ENCODE measurements at regions of chr15 and their contacts with region 1.

Region 1: DNA sequence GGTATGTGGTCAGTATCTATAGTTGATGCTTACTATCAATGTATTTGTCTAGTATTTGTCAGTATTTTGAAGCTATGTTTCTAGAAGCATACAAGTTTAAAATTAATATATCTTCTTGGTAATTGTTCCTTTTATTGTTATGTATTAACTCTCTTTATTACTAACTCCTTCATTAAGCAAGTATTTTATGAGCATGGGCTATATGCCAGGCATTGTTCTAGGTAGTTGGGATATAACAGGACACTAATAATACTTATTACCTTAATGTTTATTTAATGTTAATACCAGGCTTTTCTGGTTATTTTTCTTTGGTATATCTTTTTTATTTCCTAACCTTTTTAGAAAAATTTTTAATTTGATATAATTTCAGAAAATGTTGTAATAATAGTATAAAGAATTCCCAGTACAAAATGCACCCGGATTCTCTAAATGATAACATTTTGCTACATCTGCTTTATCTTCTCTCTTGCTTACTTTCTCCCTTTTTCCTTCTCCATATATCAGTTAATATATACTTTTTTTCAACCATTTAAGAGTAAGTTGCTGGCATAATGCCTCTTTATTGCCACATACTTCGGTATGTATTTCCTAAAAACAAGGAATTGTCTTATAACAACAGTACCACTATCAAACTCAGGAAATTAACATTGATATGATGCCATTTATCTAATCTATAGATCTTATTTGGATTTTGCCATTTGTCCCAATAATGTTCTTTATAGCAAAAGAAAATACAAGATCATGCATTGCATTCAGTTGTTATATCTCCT is 30.9 kb downstream of the LRRC49 start:
- DNase-seq: no peak
- ATAC-seq: no peak
- H3K4me3 ChIP-seq: no peak overlapping the region
- H3K27ac ChIP-seq: no peak overlapping the region
- H3K4me1 ChIP-seq: peaks cover 0 to 3% (median 0%) of the 10 kb centered on the region in 9 donors
- H3K27me3 ChIP-seq: no peaks in the 10 kb centered on the region
- CTCF ChIP-seq: no peak

Region 2: GRCh38 chr15:70912187-70912586 is 11.3 kb before region 1 on chr15:
- intact Hi-C with region 1: loop called in 1 of 10 experiments (anchors 2 kb)
- DNase-seq: no peak
- ATAC-seq: no peak
- H3K4me3 ChIP-seq: no peak overlapping the region
- H3K27ac ChIP-seq: no peak overlapping the region
- H3K4me1 ChIP-seq: peaks cover 0 to 9% (median 0%) of the 10 kb centered on the region in 9 donors
- H3K27me3 ChIP-seq: no peaks in the 10 kb centered on the region
- CTCF ChIP-seq: no peak